Uterus (tissue), 4 donors: ENCODE measurements at regions of chr9 and their contacts with region 1.

Region 1: GRCh38 chr9:127921557-127922120 is 4.8 kb upstream of the ST6GALNAC4 start:
- DNase-seq: peak; percentile 76 to 80
- H3K4me3 ChIP-seq: no peak overlapping the region
- H3K27ac ChIP-seq: no peak overlapping the region
- H3K4me1 ChIP-seq: peaks cover 4 to 5% of the 10 kb centered on the region in 2 donors
- H3K27me3 ChIP-seq: peaks cover 0 to under 1% of the 10 kb centered on the region in 2 donors
- CTCF ChIP-seq: peak; percentile 96 to 98 (median 96)
- POLR2A ChIP-seq: no peak

Region 2: GRCh38 chr9:127503947-127504782 is 417.5 kb before region 1 on chr9:
- intact Hi-C with region 1: loop called (anchors 10 kb)
- DNase-seq: peak; percentile 84 to 85
- H3K4me3 ChIP-seq: no peak overlapping the region
- H3K27ac ChIP-seq: peak overlapping the region in 1 of 2 donors; percentile 6
- H3K4me1 ChIP-seq: no peaks in the 10 kb centered on the region
- H3K27me3 ChIP-seq: no peaks in the 10 kb centered on the region
- CTCF ChIP-seq: peak; percentile 83 to 95 (median 90)
- POLR2A ChIP-seq: no peak

Region 3: DNA sequence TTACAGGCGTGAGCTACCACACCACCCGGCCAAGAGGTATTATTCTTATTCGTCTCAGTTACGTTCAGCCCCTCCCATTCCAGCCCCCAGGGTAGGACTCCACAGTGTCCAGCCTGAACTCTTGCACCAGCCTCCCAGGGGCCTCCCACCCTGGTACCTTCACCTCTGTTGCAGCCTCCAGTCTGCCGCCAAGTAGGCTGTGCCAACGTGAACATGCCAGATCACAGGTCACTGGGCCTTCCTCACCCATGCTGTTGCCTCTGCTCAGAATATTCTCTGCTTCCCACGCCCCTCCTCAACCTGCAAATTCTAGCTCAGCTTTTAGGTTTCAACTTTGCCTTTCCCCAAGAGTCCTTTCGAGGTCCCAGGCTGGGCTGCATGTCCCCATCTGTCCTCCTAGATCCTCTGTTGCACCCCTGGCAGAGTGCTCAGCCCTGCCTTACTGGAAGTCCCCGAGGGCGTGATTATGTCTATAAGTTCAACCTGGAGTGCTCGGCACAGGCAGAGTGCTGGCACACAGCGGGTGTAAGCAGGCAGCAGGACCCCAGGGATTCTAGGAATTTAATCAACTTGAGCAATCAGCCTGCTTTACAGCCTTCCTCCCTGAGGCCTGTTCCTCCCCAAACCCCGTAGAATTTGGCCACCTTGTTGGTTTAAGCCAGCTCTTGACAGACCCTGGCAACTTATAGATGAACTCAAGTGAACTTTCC is 322.6 kb before region 1 on chr9:
- intact Hi-C with region 1: loop called (anchors 5 kb)
- DNase-seq: no peak
- H3K4me3 ChIP-seq: no peak overlapping the region
- H3K27ac ChIP-seq: no peak overlapping the region
- H3K4me1 ChIP-seq: no peaks in the 10 kb centered on the region
- H3K27me3 ChIP-seq: no peaks in the 10 kb centered on the region
- CTCF ChIP-seq: no peak
- POLR2A ChIP-seq: no peak

Region 4: GRCh38 chr9:127825319-127826051 is 96.2 kb before region 1 on chr9:
- intact Hi-C with region 1: no loop called
- DNase-seq: no peak
- H3K4me3 ChIP-seq: no peak overlapping the region
- H3K27ac ChIP-seq: peak overlapping the region; percentile 88 to 96
- H3K4me1 ChIP-seq: peaks cover 16 to 17% of the 10 kb centered on the region in 2 donors
- H3K27me3 ChIP-seq: no peaks in the 10 kb centered on the region
- CTCF ChIP-seq: peak in 1 of 4 experiments; percentile 33
- POLR2A ChIP-seq: no peak

Region 5: GRCh38 chr9:128231638-128232527 is 310.2 kb after region 1 on chr9:
- intact Hi-C with region 1: no loop called
- DNase-seq: no peak
- H3K4me3 ChIP-seq: no peak overlapping the region
- H3K27ac ChIP-seq: no peak overlapping the region
- H3K4me1 ChIP-seq: no peaks in the 10 kb centered on the region
- H3K27me3 ChIP-seq: no peaks in the 10 kb centered on the region
- CTCF ChIP-seq: no peak
- POLR2A ChIP-seq: no peak